Naive thymus-derived CD4-positive, alpha-beta T cell (primary cell): ENCODE measurements at regions of chr18 and their contacts with region 1.

Region 1: DNA sequence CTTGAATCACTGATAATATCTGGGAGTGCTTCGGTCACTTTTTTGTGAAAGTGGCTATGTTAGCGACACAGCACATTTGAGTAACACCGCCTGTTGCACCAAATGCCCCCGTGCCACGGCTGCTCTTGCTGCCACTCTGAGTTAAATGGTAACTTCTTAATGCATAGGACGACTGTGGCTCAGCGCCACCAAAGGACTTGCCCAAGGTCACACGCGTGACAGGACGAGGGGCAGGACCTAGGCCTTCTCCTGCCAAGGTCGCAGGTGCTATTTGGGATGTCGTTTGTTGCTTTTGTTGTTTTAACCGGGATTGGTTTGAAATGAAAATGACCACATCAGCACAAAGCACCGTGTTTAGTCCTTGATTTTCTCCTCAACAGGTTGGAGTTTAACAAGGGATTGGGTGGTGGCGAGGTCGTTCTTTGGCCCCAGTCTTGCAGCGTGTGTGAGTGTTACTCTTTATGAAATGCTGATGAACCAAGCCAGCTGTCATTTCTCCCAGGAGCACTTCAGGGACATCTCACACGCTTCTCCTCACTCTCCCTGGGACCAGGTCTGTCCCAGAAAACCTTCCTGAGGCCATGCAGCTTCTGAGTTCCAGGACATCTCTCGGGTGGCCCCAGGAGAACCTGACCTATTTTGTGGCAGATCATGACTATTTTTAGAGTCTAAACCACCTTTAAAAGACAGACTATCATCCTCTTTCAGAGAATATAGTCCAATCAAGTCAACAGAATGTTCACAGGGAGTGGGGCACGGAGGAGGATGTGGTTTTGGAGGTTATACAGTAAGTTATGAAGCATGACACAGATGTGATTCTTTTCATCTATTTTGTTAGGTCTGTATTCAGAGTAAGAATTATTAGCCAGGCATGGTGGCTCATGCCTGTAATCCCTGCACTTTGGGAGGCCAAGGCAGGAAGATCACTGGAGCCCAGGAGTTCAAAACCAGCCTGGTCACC is 49.9 kb downstream of the MTCL1 start:
- DNase-seq: peak in 7 of 9 donors; percentile 78 to 90 (median 89)
- ATAC-seq: peak; percentile 97
- H3K4me3 ChIP-seq: peak overlapping the region; percentile 4
- H3K4me3 Mint-ChIP-seq: peak overlapping the region; percentile 68 to 94 (median 79)
- H3K27ac ChIP-seq: no peak overlapping the region
- H3K27ac Mint-ChIP-seq: peak overlapping the region in 8 of 9 donors; percentile 21 to 88 (median 71)
- H3K4me1 ChIP-seq: peaks cover 15 to 23% of the 10 kb centered on the region in 2 donors
- H3K4me1 Mint-ChIP-seq: peaks cover 17 to 39% (median 31%) of the 10 kb centered on the region in 7 donors
- H3K27me3 ChIP-seq: no peaks in the 10 kb centered on the region
- H3K27me3 Mint-ChIP-seq: peaks cover 0 to 18% (median 8%) of the 10 kb centered on the region in 5 donors

Region 2: GRCh38 chr18:8608795-8609658 is 146.2 kb before region 1 on chr18 and contains the start of gene RAB12:
- CTCF ChIA-PET with region 1: no interaction called
- POLR2A ChIA-PET with region 1: interaction called, 3 read pairs
- intact Hi-C with region 1: loop called in 1 of 2 experiments (anchors 1 kb)
- DNase-seq: peak; percentile 76 to 93 (median 87)
- ATAC-seq: peak; percentile 97
- H3K4me3 ChIP-seq: peak within 1 kb of the TSS; percentile 78
- H3K4me3 Mint-ChIP-seq: peak within 1 kb of the TSS; percentile 88 to 97 (median 94)
- H3K27ac ChIP-seq: peak within 1 kb of the TSS; percentile 76
- H3K27ac Mint-ChIP-seq: peak within 1 kb of the TSS; percentile 91 to 99 (median 96)
- H3K4me1 ChIP-seq: peaks cover 18 to 29% of the 10 kb centered on the region in 2 donors
- H3K4me1 Mint-ChIP-seq: peaks cover 42 to 63% (median 56%) of the 10 kb centered on the region in 7 donors
- H3K27me3 ChIP-seq: no peaks in the 10 kb centered on the region
- H3K27me3 Mint-ChIP-seq: peaks cover 0 to 16% (median 7%) of the 10 kb centered on the region in 5 donors
- total RNA-seq, gene RAB12: 19.8 to 26.2 (median 23.0) TPM

Region 3: GRCh38 chr18:8696749-8697211 is 58.5 kb before region 1 on chr18:
- CTCF ChIA-PET with region 1: no interaction called
- POLR2A ChIA-PET with region 1: no interaction called
- intact Hi-C with region 1: loop called in 1 of 2 experiments (anchors 2 kb)
- DNase-seq: peak; percentile 48 to 81 (median 67)
- ATAC-seq: peak; percentile 97
- H3K4me3 ChIP-seq: no peak overlapping the region
- H3K4me3 Mint-ChIP-seq: no peak overlapping the region
- H3K27ac ChIP-seq: no peak overlapping the region
- H3K27ac Mint-ChIP-seq: no peak overlapping the region
- H3K4me1 ChIP-seq: no peaks in the 10 kb centered on the region
- H3K4me1 Mint-ChIP-seq: no peaks in the 10 kb centered on the region
- H3K27me3 ChIP-seq: no peaks in the 10 kb centered on the region
- H3K27me3 Mint-ChIP-seq: peaks cover 16 to 30% (median 26%) of the 10 kb centered on the region in 5 donors

Region 4: GRCh38 chr18:8704361-8705279 is 50.7 kb before region 1 on chr18:
- CTCF ChIA-PET with region 1: no interaction called
- POLR2A ChIA-PET with region 1: no interaction called
- intact Hi-C with region 1: loop called (anchors 1 to 2 kb)
- DNase-seq: peak; percentile 65 to 92 (median 75)
- ATAC-seq: peak; percentile 96
- H3K4me3 ChIP-seq: peak overlapping the region; percentile 75
- H3K4me3 Mint-ChIP-seq: peak overlapping the region; percentile 83 to 96 (median 90)
- H3K27ac ChIP-seq: peak overlapping the region; percentile 25
- H3K27ac Mint-ChIP-seq: peak overlapping the region in 4 of 9 donors; percentile 4 to 67 (median 48)
- H3K4me1 ChIP-seq: peaks cover 6 to 21% of the 10 kb centered on the region in 2 donors
- H3K4me1 Mint-ChIP-seq: peaks cover 13 to 29% (median 17%) of the 10 kb centered on the region in 7 donors
- H3K27me3 ChIP-seq: peaks cover 5 to 19% of the 10 kb centered on the region in 2 donors
- H3K27me3 Mint-ChIP-seq: peaks cover 60 to 78% (median 68%) of the 10 kb centered on the region in 5 donors

Region 5: DNA sequence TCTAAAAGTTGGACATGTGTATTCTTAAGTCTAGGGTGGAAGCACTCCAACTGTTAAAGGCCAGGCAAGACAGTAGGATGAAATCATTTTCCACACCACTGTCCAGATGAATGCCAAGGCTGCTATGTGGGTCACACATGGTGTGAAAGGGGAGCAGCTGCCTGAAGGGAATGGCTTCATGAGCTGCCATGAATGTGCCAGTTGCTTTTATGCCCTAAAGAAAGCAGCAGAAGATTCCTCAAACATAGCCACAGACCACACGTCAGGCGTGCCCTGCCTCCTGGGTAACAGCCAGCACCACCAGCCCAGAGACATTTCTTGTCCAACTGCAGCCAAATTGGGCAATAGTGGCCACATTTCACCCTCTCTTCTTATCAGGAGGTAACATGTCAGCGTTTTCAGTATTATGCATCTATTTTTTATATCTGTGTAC is 80.3 kb after region 1 on chr18:
- CTCF ChIA-PET with region 1: no interaction called
- POLR2A ChIA-PET with region 1: no interaction called
- intact Hi-C with region 1: no loop called
- DNase-seq: no peak
- ATAC-seq: no peak
- H3K4me3 ChIP-seq: no peak overlapping the region
- H3K4me3 Mint-ChIP-seq: no peak overlapping the region
- H3K27ac ChIP-seq: no peak overlapping the region
- H3K27ac Mint-ChIP-seq: no peak overlapping the region
- H3K4me1 ChIP-seq: no peaks in the 10 kb centered on the region
- H3K4me1 Mint-ChIP-seq: no peaks in the 10 kb centered on the region
- H3K27me3 ChIP-seq: no peaks in the 10 kb centered on the region
- H3K27me3 Mint-ChIP-seq: peaks cover 0 to 6% (median 0%) of the 10 kb centered on the region in 5 donors

Region 6: DNA sequence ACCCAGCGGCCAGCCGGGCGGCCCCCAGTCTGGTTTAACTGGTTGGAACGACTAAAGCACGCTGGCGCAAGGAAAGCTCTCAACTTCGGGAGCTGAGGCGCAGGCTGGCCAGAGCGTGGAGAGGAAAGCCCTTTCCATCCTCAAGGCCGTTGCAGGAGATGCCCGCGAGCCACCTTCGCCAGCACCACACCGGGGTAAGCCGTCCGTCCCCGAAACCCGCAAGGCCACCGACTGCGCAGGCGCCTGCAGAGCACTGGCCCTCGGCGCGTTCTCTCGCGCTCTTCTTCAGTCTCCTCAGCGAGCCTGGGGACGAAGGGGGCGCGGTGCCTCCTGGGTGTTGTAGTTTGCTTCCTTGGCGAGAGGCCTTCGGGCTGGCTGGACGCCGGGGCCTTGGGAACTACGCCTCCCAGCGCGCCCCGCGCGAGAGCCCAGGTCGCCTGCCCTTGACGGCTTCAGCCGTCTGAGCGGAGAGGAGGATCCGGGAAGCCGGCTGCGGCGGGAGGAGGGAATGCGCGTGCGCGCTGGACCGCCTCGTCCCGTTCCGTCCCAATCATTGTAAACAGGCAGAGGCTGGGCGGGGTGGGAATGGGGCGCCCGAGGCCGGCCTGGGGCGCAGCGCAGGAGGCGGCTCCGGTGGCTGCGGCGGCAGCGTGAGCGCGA is 719.8 kb after region 1 on chr18 and contains the start of gene RALBP1:
- CTCF ChIA-PET with region 1: no interaction called
- POLR2A ChIA-PET with region 1: no interaction called
- intact Hi-C with region 1: loop called in 1 of 2 experiments (anchors 2 kb)
- DNase-seq: peak; percentile 92 to 98 (median 96)
- ATAC-seq: peak; percentile 99
- H3K4me3 ChIP-seq: peak within 1 kb of the TSS; percentile 88
- H3K4me3 Mint-ChIP-seq: peak within 1 kb of the TSS; percentile 84 to 99 (median 97)
- H3K27ac ChIP-seq: peak within 1 kb of the TSS; percentile 81
- H3K27ac Mint-ChIP-seq: peak within 1 kb of the TSS; percentile 82 to 97 (median 94)
- H3K4me1 ChIP-seq: peaks cover 0 to 14% of the 10 kb centered on the region in 2 donors
- H3K4me1 Mint-ChIP-seq: peaks cover 21 to 41% (median 30%) of the 10 kb centered on the region in 7 donors
- H3K27me3 ChIP-seq: no peaks in the 10 kb centered on the region
- H3K27me3 Mint-ChIP-seq: peaks cover 0 to 24% (median 5%) of the 10 kb centered on the region in 5 donors
- total RNA-seq, gene RALBP1: 20.3 to 47.8 (median 42.2) TPM

Region 7: DNA sequence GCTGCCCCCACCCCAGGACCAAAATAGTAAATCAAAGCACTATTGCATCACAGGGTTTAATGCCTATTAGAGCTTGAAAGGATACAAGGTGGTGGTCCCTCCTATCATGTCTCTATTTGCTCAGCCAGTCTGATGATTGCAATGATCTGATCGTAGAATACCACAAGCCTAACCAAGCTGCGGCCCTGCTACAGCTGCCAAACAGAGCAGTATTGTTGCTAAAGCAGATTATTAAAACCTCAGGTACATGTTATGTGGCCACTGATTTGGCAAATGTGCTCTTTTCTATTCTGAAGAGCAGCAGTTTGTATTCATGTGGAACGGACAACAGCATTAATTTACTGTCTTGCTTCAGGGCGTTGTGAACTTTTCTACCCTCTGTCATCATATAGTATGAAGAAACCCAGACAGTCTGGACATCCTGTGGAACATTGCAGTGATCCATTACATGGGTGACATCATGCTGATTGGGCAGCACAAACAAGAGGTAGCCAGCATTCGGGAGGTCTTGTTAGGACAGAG is 1150.2 kb after region 1 on chr18:
- CTCF ChIA-PET with region 1: no interaction called
- POLR2A ChIA-PET with region 1: no interaction called
- intact Hi-C with region 1: no loop called
- DNase-seq: no peak
- ATAC-seq: no peak
- H3K4me3 ChIP-seq: no peak overlapping the region
- H3K4me3 Mint-ChIP-seq: no peak overlapping the region
- H3K27ac ChIP-seq: no peak overlapping the region
- H3K27ac Mint-ChIP-seq: no peak overlapping the region
- H3K4me1 ChIP-seq: no peaks in the 10 kb centered on the region
- H3K4me1 Mint-ChIP-seq: no peaks in the 10 kb centered on the region
- H3K27me3 ChIP-seq: no peaks in the 10 kb centered on the region
- H3K27me3 Mint-ChIP-seq: peaks cover 3 to 47% (median 15%) of the 10 kb centered on the region in 5 donors